Activated T-helper 1 cell treated with anti-CD3 and anti-CD28 coated beads, Interleukin-12 subunit alpha, Interleukin-12 subunit beta, Interleukin-2, Interleukin-4 antibody, amounts not matched to agents 30 ng/mL and 10 ng/mL and 1 ng/mL, durations not matched to agents 14 hours and 24 hours and 36 hours (primary cell): ENCODE measurements at regions of chr22 and their contacts with region 1.

Region 1: GRCh38 chr22:31661851-31662656 is at the start of gene PISD:
- DNase-seq: peak; percentile 96
- H3K4me3 Mint-ChIP-seq: peak within 1 kb of the TSS; percentile 99
- H3K27ac Mint-ChIP-seq: peak within 1 kb of the TSS; percentile 95
- H3K4me1 Mint-ChIP-seq: peaks cover 29% of the 10 kb centered on the region
- H3K27me3 Mint-ChIP-seq: peaks cover 2% of the 10 kb centered on the region
- total RNA-seq, gene PISD: 43.8 and 43.9 TPM in 2 replicates

Region 2: GRCh38 chr22:31399211-31400028 is 262.6 kb before region 1 on chr22 and contains the start of gene DRG1:
- intact Hi-C with region 1: loop called (anchors 1 kb)
- DNase-seq: peak; percentile 97
- H3K4me3 Mint-ChIP-seq: peak within 1 kb of the TSS; percentile 100
- H3K27ac Mint-ChIP-seq: peak within 1 kb of the TSS; percentile 93
- H3K4me1 Mint-ChIP-seq: peaks cover 13% of the 10 kb centered on the region
- H3K27me3 Mint-ChIP-seq: peaks cover 2% of the 10 kb centered on the region
- total RNA-seq, gene DRG1: 113 and 125 TPM in 2 replicates

Region 3: DNA sequence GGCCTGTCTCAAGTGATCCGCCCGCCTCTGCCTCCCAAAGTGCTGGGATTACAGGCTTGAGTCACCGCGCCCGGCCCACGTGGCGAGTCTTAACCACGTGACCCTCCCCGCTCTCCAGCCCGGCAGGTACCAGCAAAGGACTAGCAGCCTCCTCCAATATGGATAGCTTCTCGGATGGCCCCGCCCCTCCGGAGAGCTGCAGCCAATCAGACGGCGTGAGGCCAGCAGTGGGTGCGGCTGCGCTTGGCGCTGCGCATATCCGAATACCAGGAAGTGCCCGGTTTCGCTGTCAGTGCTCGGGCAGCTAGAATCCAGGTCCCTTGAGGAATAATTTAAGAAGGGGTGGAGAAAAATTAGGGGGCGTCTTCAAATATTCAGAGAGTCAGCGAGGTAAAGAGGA is 14.6 kb after region 1 on chr22:
- intact Hi-C with region 1: loop called (anchors 1 kb)
- DNase-seq: peak; percentile 91
- H3K4me3 Mint-ChIP-seq: peak overlapping the region; percentile 95
- H3K27ac Mint-ChIP-seq: peak overlapping the region; percentile 92
- H3K4me1 Mint-ChIP-seq: peaks cover 12% of the 10 kb centered on the region
- H3K27me3 Mint-ChIP-seq: no peaks in the 10 kb centered on the region

Region 4: DNA sequence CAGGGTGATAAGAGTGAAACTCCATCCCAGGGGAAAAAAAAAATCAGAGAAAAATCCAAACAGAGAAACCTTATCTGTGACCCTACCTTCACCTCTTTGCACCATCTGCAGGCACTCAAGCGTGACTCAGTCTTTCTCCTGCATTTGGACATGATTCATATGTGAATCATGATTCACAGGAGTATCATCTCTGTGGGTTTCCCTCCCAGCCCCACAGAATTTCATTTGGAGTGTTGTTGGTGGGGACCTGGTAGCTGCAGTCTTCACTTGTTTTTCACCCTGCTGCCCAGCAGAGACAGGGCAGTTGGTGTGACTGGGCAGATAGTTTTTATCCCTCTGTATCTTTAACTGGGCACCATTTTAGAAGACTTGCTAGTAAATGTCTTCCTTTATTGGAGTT is 167.5 kb after region 1 on chr22:
- intact Hi-C with region 1: loop called (anchors 1 kb)
- DNase-seq: peak; percentile 7
- H3K4me3 Mint-ChIP-seq: peak overlapping the region; percentile 72
- H3K27ac Mint-ChIP-seq: peak overlapping the region; percentile 95
- H3K4me1 Mint-ChIP-seq: peaks cover 30% of the 10 kb centered on the region
- H3K27me3 Mint-ChIP-seq: no peaks in the 10 kb centered on the region

Region 5: DNA sequence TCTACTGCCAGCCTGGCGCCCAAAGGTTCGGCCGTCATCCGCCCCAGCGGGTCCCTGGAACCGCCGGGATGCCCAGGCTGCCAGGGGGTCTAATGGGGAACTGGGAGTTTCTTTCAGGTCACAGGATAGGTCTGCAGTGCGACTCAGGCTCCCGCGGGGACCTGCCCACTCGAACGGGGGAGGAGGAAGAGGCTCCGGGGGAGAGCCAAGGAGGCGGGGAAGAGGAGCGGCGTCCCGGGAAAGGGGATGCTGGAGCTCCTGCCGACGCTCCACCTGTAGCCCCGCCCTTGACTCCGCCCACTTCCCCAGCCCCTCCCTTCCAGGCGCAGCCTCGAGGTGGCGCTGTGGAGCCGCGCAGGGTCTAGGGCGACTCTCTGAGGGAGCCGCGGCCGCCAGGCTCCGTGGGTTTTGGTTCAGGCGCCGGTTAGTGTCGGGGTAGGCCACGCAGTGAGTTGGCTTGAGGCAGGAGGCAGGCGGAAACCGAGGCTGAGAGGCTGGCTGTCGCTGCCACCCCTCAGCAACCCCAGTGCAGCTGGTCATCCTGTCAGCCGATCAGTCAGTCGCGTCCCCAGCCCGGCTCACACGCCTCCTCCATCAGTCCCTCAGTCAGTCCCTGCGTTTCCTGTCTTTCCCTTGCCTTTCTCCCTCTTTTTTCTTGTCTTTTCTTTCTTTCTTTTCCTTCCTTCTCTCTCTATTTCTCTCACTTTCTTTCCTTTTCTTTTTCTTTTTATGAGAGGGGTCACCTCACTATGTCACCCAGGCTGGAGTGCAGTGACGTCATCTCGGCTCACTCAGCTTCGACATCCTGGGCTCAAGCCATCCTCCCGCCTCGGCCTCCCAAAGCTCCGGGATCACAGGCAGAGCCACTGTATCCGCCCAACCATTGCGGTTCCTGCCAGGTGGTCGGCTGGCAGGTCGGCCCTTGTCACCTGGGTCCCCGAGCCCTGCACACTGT is 308.7 kb after region 1 on chr22:
- intact Hi-C with region 1: loop called (anchors 1 kb)
- DNase-seq: peak; percentile 86
- H3K4me3 Mint-ChIP-seq: peak overlapping the region; percentile 77
- H3K27ac Mint-ChIP-seq: no peak overlapping the region
- H3K4me1 Mint-ChIP-seq: peaks cover 14% of the 10 kb centered on the region
- H3K27me3 Mint-ChIP-seq: peaks cover 4% of the 10 kb centered on the region

Region 6: DNA sequence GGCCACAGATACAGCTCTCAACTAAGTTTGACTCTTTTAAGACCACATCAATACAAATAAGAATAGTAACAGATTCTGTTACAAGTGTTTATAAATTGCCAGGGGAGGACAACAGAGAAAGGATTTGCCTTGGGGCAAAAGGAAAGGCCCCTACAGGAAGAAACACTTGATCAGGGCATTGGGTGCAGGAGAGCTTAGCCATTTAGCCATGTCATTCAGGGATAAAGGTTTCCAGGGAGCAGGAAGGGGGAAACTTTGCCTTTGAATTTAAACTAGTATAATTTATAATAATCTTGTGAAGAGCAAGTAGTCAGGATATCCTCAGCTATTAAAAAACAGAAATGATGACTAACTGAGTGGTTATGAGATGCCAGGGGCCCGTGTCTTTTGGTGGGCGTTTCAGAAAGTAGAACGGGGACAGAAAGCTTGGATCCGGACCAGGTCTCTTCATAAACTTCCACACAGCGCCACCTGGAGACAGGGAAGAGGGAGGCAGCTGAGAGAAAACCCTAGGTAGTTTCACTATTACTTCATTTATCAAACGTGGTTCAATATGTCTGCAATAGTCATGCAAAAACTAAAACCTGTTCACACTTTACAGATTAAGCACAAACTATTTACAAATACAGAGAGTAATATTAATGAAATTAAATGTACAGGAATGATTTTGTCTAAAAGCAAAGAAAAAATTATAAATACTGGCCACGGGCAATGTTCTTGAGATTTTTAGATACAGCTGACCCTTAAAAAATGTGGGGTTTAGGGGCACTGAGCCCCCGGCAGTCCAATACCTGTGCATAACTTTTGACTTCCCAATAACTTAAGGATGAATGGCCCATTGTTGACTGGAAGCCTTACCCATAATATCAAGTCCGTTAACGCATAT is 604.1 kb after region 1 on chr22:
- intact Hi-C with region 1: loop called (anchors 10 kb)
- DNase-seq: peak; percentile 33
- H3K4me3 Mint-ChIP-seq: no peak overlapping the region
- H3K27ac Mint-ChIP-seq: no peak overlapping the region
- H3K4me1 Mint-ChIP-seq: peaks cover 10% of the 10 kb centered on the region
- H3K27me3 Mint-ChIP-seq: peaks cover 2% of the 10 kb centered on the region